Activated T-helper 1 cell treated with anti-CD3 and anti-CD28 coated beads, Interleukin-12 subunit alpha, Interleukin-12 subunit beta, Interleukin-2, Interleukin-4 antibody, amounts not matched to agents 30 ng/mL and 10 ng/mL and 1 ng/mL, durations not matched to agents 14 hours and 24 hours and 36 hours (primary cell): ENCODE measurements at regions of chr14 and their contacts with region 1.

Region 1: GRCh38 chr14:35355981-35356841 is 48.3 kb downstream of the NFKBIA start:
- DNase-seq: no peak
- H3K4me3 Mint-ChIP-seq: no peak overlapping the region
- H3K27ac Mint-ChIP-seq: peak overlapping the region; percentile 33
- H3K4me1 Mint-ChIP-seq: peaks cover 16% of the 10 kb centered on the region
- H3K27me3 Mint-ChIP-seq: no peaks in the 10 kb centered on the region

Region 2: GRCh38 chr14:35301735-35302528 is 54.3 kb before region 1 on chr14:
- intact Hi-C with region 1: loop called (anchors 1 kb)
- DNase-seq: no peak
- H3K4me3 Mint-ChIP-seq: peak overlapping the region; percentile 37
- H3K27ac Mint-ChIP-seq: peak overlapping the region; percentile 89
- H3K4me1 Mint-ChIP-seq: peaks cover 43% of the 10 kb centered on the region
- H3K27me3 Mint-ChIP-seq: no peaks in the 10 kb centered on the region